Sciatic nerve (tissue), 2 donors: ENCODE measurements at regions of chr1 and their contacts with region 1.

Region 1: GRCh38 chr1:6526316-6526715 is 28.0 kb downstream of the NOL9 start:
- DNase-seq: no peak
- ATAC-seq: no peak

Region 2: GRCh38 chr1:4851385-4852065 is 1674.8 kb before region 1 on chr1:
- intact Hi-C with region 1: no loop called
- DNase-seq: no peak
- ATAC-seq: no peak

Region 3: GRCh38 chr1:6475381-6476133 is 50.8 kb before region 1 on chr1:
- intact Hi-C with region 1: loop called (anchors 2 kb)
- DNase-seq: peak; percentile 76
- ATAC-seq: peak; percentile 69

Region 4: DNA sequence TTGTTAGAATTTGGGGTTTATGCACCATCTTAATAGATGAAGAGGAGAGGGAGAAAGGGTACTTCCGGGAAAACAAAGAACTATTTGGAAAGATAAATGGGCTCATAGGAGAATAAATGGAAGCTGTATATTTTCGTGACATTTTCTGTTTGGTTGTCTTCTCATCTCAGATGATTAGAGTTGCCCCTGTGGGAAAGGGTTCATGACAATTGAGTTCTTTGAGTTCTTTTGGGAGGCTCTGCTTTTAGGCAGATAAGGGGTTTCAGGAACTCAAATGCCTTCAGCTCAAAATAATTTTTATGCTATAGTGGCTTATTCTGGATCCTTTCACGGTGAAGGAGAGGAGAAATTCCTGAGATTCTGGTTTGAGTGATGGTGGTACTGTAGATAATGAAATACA is 322.5 kb after region 1 on chr1:
- intact Hi-C with region 1: loop called (anchors 5 kb)
- DNase-seq: no peak
- ATAC-seq: no peak

Region 5: DNA sequence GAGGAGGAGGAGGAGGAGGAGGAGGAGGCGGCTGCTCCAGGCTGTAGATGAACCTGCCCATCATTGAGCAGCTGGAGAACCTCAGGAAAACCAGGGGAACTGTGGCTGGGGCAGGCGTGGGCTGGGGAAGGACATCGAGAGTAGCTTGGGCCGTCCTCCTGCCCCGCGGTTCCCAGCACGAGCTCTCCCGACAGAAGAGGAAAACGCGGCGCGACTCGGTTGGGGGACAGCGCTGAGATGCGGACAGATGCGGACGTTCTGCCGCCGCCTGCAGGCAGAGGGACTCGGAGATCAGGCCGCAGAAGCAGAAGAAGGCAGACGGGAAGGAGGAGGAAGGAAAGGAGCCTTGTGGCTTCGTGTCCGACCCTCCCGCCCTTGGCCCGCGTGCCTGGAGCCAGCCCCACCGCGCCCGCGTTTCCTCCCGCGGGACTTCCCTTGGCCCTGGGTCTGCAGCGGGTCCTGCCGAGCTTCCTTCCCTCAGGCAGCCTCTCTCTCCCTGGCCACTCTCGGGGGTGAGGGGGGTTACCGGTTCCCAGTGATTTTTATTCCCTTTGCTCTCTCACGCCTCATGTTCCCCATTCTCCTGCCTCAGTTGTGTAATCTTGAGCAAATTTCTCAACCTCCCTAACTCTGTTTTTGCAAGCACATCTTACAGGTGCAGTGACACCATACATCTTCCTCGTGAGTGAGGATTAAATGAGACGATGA is 1416.1 kb after region 1 on chr1:
- intact Hi-C with region 1: no loop called
- DNase-seq: peak; percentile 80
- ATAC-seq: peak; percentile 89